Sigmoid colon (tissue), 7 donors: ENCODE measurements at regions of chr2 and their contacts with region 1.

Region 1: GRCh38 chr2:109510136-109511028 is 103.4 kb downstream of the SEPTIN10 start:
- DNase-seq: peak; percentile 89
- H3K4me3 ChIP-seq: no peak overlapping the region
- H3K27ac ChIP-seq: no peak overlapping the region
- H3K4me1 ChIP-seq: peaks cover 0 to 29% (median 23%) of the 10 kb centered on the region in 4 donors
- H3K27me3 ChIP-seq: no peaks in the 10 kb centered on the region
- CTCF ChIP-seq: peak; percentile 83 to 96 (median 90)
- EP300 ChIP-seq: no peak
- POLR2A ChIP-seq: no peak

Region 2: GRCh38 chr2:108855194-108855593 is 655.2 kb before region 1 on chr2:
- intact Hi-C with region 1: loop called (anchors 10 kb)
- DNase-seq: no peak
- H3K4me3 ChIP-seq: no peak overlapping the region
- H3K27ac ChIP-seq: no peak overlapping the region
- H3K4me1 ChIP-seq: no peaks in the 10 kb centered on the region
- H3K27me3 ChIP-seq: no peaks in the 10 kb centered on the region
- CTCF ChIP-seq: peak in 1 of 4 experiments; percentile 14
- EP300 ChIP-seq: no peak
- POLR2A ChIP-seq: no peak

Region 3: GRCh38 chr2:109128048-109128465 is 382.3 kb before region 1 on chr2:
- intact Hi-C with region 1: loop called (anchors 1 kb)
- DNase-seq: peak; percentile 92
- H3K4me3 ChIP-seq: peak overlapping the region; percentile 42 to 86 (median 74)
- H3K27ac ChIP-seq: peak overlapping the region; percentile 74 to 87 (median 84)
- H3K4me1 ChIP-seq: peaks cover 0 to 28% (median 21%) of the 10 kb centered on the region in 4 donors
- H3K27me3 ChIP-seq: no peaks in the 10 kb centered on the region
- CTCF ChIP-seq: peak; percentile 87 to 91 (median 88)
- EP300 ChIP-seq: no peak
- POLR2A ChIP-seq: peak in 1 of 2 donors; percentile 15

Region 4: GRCh38 chr2:109318150-109318948 is 192.0 kb before region 1 on chr2:
- intact Hi-C with region 1: loop called (anchors 5 kb)
- DNase-seq: peak; percentile 95
- H3K4me3 ChIP-seq: peak overlapping the region in 2 of 4 donors; percentile 3 to 21
- H3K27ac ChIP-seq: peak overlapping the region; percentile 76 to 82 (median 82)
- H3K4me1 ChIP-seq: peaks cover 0 to 58% (median 52%) of the 10 kb centered on the region in 4 donors
- H3K27me3 ChIP-seq: no peaks in the 10 kb centered on the region
- CTCF ChIP-seq: no peak
- EP300 ChIP-seq: peak in 1 of 4 donors; percentile 14
- POLR2A ChIP-seq: no peak

Region 5: GRCh38 chr2:109529532-109530449 is 19.4 kb after region 1 on chr2:
- intact Hi-C with region 1: no loop called
- DNase-seq: peak; percentile 85
- H3K4me3 ChIP-seq: no peak overlapping the region
- H3K27ac ChIP-seq: peak overlapping the region in 2 of 4 donors; percentile 23 to 42
- H3K4me1 ChIP-seq: peaks cover 0 to 4% (median 0%) of the 10 kb centered on the region in 4 donors
- H3K27me3 ChIP-seq: no peaks in the 10 kb centered on the region
- CTCF ChIP-seq: no peak
- EP300 ChIP-seq: no peak
- POLR2A ChIP-seq: no peak